Activated T-helper 2 cell treated with anti-CD3 and anti-CD28 coated beads, Interferon-gamma antibody, Interleukin-2, Interleukin-4, amounts not matched to agents 10 μg/mL and 5 μg/mL and 100 μg/mL, durations not matched to agents 14 hours and 24 hours and 36 hours (primary cell): ENCODE measurements at regions of chr4 and their contacts with region 1.

Region 1: GRCh38 chr4:173013232-173013930 is 155.2 kb upstream of the GALNT7 start:
- DNase-seq: no peak
- H3K4me3 Mint-ChIP-seq: no peak overlapping the region
- H3K27ac Mint-ChIP-seq: no peak overlapping the region
- H3K4me1 Mint-ChIP-seq: no peaks in the 10 kb centered on the region
- H3K27me3 Mint-ChIP-seq: peaks cover 9% of the 10 kb centered on the region

Region 2: DNA sequence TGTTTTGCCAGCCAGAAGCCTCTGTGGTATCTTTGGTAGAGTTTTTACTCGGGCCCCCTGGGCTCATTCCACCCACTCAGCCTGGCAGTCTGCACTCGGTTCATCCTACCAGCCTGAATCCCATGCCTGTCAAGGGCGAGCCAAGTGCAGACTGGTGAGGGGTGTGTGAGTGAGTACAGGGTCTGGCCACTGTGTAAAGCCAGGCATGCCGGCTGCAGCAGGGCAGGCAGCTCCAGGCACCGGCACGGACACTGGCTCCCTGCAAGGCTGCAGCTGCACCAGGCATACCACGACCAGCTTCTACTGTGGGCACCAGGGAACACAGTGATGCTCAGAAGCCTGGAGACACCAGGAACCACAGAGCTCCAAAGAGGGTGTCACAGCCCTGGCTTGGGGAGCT is 38.8 kb before region 1 on chr4:
- intact Hi-C with region 1: no loop called
- DNase-seq: no peak
- H3K4me3 Mint-ChIP-seq: no peak overlapping the region
- H3K27ac Mint-ChIP-seq: no peak overlapping the region
- H3K4me1 Mint-ChIP-seq: no peaks in the 10 kb centered on the region
- H3K27me3 Mint-ChIP-seq: no peaks in the 10 kb centered on the region

Region 3: DNA sequence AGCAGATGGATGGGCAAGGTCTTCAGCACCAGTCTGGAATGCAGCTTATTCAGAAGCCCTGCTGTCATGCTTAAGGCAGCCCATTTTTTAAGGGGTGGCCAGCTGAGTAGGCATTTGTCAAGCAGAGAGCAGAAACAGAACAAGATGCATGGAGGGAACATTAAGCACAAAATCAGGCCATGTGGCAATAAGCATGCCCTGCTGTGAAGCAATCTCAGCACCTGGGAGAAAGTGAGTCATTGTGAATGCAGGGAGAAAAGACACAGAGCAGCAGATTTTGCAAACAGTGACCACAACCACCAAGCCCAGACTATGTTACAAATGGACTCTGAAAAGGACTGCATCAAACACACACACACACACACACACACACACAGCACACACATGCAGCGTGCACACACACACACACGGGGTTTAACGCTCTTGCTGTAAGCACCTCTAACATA is 61.1 kb after region 1 on chr4:
- intact Hi-C with region 1: no loop called
- DNase-seq: no peak
- H3K4me3 Mint-ChIP-seq: no peak overlapping the region
- H3K27ac Mint-ChIP-seq: no peak overlapping the region
- H3K4me1 Mint-ChIP-seq: no peaks in the 10 kb centered on the region
- H3K27me3 Mint-ChIP-seq: no peaks in the 10 kb centered on the region

Region 4: DNA sequence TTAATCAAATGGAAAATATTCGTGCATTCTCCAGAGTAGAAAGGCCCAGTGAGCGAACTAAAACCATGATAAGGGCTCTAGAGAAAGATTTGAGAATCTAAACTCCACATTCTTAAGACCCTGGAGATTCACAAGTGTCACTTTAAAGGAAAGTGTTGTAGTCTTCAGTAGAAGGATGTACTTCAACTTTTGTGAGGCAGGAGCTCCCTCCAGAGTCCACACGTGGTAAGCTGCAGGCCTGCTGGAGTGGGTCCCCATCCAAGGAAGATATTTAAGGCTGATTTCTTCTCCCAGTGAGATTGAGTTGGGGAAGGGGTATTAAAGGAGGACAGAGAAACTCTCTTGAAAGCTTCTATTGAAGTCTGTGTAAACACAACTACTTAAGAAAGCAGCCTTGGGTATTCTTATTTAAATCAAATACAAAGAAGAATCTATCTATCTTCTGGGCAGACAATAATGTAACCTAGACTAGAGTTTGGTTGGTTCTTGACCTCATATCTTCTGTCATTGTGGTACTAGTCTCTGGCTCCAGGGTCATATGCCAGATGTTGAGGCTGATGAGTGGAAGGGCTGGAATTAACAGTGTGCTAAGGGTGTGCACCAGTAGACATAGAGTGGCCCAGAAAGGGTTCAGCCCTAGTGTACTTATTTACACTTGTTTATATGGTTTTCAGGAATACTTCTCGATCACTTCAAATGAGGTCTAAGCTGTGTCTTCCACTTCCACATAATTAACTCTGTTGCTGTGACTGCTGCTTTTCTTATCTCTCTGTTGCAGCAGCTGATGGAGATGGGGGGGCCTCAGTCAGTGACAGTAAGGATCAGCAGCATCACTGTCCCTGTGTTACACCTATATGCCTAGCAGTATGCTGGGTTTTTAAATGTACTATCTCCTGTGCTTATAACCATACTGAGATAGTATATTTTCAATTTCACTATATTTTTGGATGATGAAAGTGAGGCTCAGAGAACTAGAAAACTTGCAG is 244.6 kb after region 1 on chr4:
- intact Hi-C with region 1: loop called (anchors 1 kb)
- DNase-seq: peak; percentile 29
- H3K4me3 Mint-ChIP-seq: no peak overlapping the region
- H3K27ac Mint-ChIP-seq: no peak overlapping the region
- H3K4me1 Mint-ChIP-seq: peaks cover 2% of the 10 kb centered on the region
- H3K27me3 Mint-ChIP-seq: no peaks in the 10 kb centered on the region

Region 5: GRCh38 chr4:173301518-173302201 is 288.3 kb after region 1 on chr4:
- intact Hi-C with region 1: loop called (anchors 1 kb)
- DNase-seq: no peak
- H3K4me3 Mint-ChIP-seq: no peak overlapping the region
- H3K27ac Mint-ChIP-seq: no peak overlapping the region
- H3K4me1 Mint-ChIP-seq: peaks cover 4% of the 10 kb centered on the region
- H3K27me3 Mint-ChIP-seq: no peaks in the 10 kb centered on the region

Region 6: DNA sequence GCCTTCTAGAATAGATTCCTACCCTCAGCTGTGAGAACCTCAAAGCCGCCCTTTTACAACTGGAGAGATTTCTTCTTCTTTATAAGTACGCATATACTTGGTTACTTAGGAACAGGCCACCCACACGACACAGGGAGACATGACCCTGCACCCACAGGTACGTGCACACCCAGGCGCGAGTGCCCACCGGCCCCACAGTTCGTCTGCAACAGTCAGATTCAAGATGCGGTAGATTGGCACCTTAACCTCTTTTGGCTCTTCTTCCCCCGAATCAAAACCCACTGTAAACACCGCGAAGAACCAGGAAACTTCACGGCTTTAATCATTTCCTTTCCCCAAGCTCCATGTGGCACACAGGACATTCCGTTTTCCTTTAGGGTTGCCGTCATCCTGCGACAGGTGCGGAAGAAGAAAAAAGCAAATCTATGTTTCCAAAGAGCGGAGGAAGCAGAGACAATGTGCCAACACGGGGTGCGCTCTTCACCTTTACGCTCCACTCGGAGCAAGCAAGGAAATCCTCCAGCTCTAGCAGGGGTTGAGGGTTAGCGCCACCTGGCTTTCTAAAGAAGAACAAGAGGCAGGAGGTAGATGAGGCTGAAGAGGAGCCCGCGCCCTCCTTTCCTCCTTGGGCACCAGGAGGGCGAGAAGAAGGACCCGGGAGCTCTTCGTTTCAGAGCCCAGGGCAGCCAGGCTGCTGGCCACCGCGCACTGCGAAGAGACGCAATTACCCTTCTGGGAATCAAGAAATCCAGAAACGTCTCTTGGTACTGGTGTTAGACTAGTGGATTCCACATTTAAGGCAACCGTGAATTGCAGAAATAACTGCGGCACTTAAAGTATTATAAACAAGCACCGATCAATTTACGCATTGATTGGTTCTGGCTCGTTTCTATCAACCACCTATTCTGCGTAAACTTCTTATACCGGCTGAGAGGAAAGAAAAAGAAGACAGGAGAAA is 480.9 kb after region 1 on chr4:
- intact Hi-C with region 1: loop called (anchors 10 kb)
- DNase-seq: peak; percentile 53
- H3K4me3 Mint-ChIP-seq: peak overlapping the region; percentile 81
- H3K27ac Mint-ChIP-seq: no peak overlapping the region
- H3K4me1 Mint-ChIP-seq: peaks cover 18% of the 10 kb centered on the region
- H3K27me3 Mint-ChIP-seq: peaks cover 29% of the 10 kb centered on the region